ENCODE measurements at regions of chrX and their contacts with region 1.

Region 1: DNA sequence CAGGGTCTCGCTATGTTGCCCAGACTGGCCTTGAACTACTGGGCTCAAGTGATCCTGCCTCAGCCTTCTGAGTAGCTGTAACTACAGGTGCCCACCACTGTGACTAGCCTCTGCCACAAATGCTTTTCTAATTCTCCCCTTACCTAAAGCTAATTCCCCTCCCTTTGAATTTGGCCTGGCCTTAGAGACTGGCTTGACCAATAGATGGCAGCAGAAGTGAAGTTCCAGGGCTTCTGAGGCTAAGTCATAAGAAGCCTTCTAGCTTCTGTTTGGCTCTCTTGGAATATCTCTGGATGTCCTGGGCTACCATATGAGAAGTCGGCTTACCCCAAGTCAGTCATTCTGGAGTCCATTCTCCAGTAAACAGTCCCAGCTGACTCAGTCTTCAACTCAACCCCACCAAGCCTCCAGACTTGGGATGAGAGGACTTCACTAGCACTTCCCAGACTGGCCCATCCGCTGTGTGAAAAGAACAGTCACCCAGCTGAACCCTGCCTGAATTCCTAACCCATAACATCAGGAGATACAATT is 61.0 kb downstream of the HPRT1 start:
- ATAC-seq: peak in 7 of 8 experiments; percentile 33 to 93 (median 71)
- H3K4me3 ChIP-seq: no peak overlapping the region
- H3K27ac ChIP-seq: no peak overlapping the region
- H3K4me1 ChIP-seq: no peaks in the 10 kb centered on the region

Region 2: DNA sequence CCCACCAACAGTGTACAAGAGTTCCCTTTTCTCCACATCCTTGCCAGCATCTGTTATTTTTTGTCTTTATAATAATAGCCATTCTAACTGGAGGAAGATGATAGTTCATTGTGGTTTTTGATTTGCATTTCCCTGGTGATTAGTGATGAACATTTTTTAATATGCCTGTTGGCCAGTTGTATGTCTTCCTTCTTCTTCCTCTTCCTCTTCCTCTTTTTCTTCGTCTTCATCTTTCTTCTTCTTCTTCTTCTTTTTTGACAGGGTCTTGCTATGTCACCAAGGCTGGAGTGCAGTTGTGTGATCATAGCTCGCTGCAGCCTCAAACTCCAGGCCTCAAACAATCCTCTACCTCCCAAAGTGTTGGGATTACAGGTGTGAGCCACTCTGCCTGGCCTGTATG is 196.6 kb before region 1 on chrX:
- in situ Hi-C with region 1: no loop called
- ATAC-seq: no peak
- H3K4me3 ChIP-seq: no peak overlapping the region
- H3K27ac ChIP-seq: no peak overlapping the region
- H3K4me1 ChIP-seq: no peaks in the 10 kb centered on the region

Region 3: GRCh38 chrX:134396174-134396573 is 124.8 kb before region 1 on chrX:
- in situ Hi-C with region 1: no loop called
- ATAC-seq: no peak
- H3K4me3 ChIP-seq: no peak overlapping the region
- H3K27ac ChIP-seq: no peak overlapping the region
- H3K4me1 ChIP-seq: no peaks in the 10 kb centered on the region

Region 4: DNA sequence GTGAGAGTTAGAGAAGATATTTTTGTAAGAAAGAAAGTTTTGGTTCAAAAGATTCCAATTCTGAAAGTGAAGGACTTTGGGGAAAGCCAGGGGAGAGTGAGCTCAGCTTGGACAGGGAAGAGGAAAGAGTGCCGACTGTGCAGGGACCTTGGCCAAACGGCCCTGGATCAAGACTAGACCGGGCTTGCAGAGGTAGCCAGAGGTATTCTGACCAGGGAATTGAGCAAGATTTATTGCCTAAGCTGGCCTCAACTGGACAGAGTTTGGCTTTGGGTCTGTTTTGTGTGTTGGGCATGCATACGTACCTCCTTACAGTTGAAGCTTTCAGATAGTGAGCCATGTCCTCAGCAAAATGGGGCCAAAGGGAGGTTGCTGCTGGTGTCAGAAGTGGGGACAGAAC is 125.8 kb after region 1 on chrX:
- in situ Hi-C with region 1: no loop called
- ATAC-seq: no peak
- H3K4me3 ChIP-seq: no peak overlapping the region
- H3K27ac ChIP-seq: no peak overlapping the region
- H3K4me1 ChIP-seq: no peaks in the 10 kb centered on the region

Region 5: GRCh38 chrX:134764212-134764785 is 243.4 kb after region 1 on chrX:
- in situ Hi-C with region 1: loop called in 4 of 9 experiments (anchors 25 kb)
- ATAC-seq: peak in 3 of 8 experiments; percentile 31 to 82 (median 61)
- H3K4me3 ChIP-seq: no peak overlapping the region
- H3K27ac ChIP-seq: no peak overlapping the region
- H3K4me1 ChIP-seq: no peaks in the 10 kb centered on the region